ENCODE measurements at regions of chr17 and their contacts with region 1.

Region 1: GRCh38 chr17:77549726-77550366 is 408.7 kb upstream of the TNRC6C start:
- DNase-seq: no peak
- ATAC-seq: no peak
- H3K4me3 ChIP-seq: no peak overlapping the region
- H3K27ac ChIP-seq: no peak overlapping the region
- H3K4me1 ChIP-seq: peaks cover 0 to 4% (median 0%) of the 10 kb centered on the region in 9 donors
- H3K27me3 ChIP-seq: no peaks in the 10 kb centered on the region
- CTCF ChIP-seq: no peak

Region 2: DNA sequence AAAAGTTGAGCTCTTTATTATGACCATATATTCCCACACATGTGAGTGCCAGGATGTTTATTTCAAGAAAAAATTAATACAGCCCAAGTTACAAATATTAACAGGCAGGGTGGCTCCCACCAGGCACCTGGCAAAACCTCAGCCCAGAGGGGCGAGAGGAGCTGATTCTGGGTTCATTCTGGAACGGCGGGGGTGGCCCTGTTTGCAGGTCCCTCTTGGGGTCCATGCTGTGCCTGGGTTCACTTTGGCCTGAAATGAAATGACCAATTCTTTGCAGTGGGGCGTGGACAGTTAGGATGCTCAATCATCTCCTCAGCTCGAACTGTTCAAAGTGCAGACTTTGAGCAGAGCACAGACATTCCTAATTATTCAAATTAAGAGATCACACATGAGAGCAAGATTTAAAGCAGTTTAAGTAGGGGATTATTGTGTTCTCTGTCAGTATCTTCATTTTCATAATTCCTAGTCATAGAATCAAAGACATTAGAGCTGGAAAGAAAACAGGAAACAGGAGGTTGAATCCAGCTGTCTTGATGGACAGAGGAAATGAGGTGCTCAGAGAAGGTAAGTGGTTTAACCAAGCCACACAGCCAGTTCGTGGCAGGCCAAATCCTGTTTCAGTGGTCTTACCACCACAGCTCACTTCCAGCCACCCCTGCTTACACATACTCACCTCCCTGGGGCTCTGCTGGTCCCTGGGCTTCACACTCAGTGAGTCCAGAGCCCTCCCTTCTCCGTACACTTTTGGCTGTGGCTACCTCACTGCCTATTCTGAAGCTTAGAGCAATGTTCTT is 44.8 kb after region 1 on chr17:
- intact Hi-C with region 1: loop called in 1 of 10 experiments (anchors 5 kb)
- DNase-seq: no peak
- ATAC-seq: no peak
- H3K4me3 ChIP-seq: no peak overlapping the region
- H3K27ac ChIP-seq: no peak overlapping the region
- H3K4me1 ChIP-seq: no peaks in the 10 kb centered on the region
- H3K27me3 ChIP-seq: peaks cover 0 to 4% (median 0%) of the 10 kb centered on the region in 7 donors
- CTCF ChIP-seq: no peak